Caco-2 (cell line): ENCODE measurements at regions of chr4 and their contacts with region 1.

Region 1: DNA sequence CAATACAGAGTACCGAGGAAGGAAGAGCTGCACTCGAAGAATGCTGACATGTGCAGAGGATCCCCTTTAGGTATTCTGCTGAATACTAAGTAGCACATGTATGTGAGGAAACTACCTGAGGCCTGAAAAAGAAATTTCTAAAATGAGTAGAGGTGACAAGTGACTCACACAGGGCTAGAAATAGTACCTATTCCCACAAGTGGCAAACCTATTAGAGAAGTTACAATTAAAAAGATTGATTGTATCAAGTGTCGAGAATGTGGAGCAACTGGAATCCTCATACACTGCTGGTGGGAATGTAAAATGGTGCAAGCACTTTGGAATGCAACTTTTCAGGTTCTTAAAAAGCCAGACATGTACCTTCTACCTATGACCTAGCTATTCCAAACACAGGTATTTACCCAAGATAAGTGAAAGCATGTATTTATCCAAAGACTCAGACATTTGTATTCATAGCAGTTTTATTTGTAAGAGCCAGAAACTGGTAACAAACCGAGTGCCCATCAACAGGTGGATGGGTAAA is 47.5 kb downstream of the CCSER1 start:
- DNase-seq: peak; percentile 67 to 77
- H3K4me3 ChIP-seq: no peak overlapping the region
- H3K4me3 Mint-ChIP-seq: peak overlapping the region; percentile 63
- H3K27ac Mint-ChIP-seq: peak overlapping the region; percentile 85
- H3K4me1 ChIP-seq: peaks cover 46% of the 10 kb centered on the region
- H3K4me1 Mint-ChIP-seq: peaks cover 51% of the 10 kb centered on the region
- H3K27me3 ChIP-seq: no peaks in the 10 kb centered on the region
- H3K27me3 Mint-ChIP-seq: no peaks in the 10 kb centered on the region
- CTCF ChIP-seq: no peak

Region 2: GRCh38 chr4:89765966-89766365 is 408.7 kb before region 1 on chr4:
- CTCF ChIA-PET with region 1: no interaction called
- POLR2A ChIA-PET with region 1: no interaction called
- intact Hi-C with region 1: no loop called
- DNase-seq: no peak
- H3K4me3 ChIP-seq: no peak overlapping the region
- H3K4me3 Mint-ChIP-seq: no peak overlapping the region
- H3K27ac Mint-ChIP-seq: no peak overlapping the region
- H3K4me1 ChIP-seq: no peaks in the 10 kb centered on the region
- H3K4me1 Mint-ChIP-seq: no peaks in the 10 kb centered on the region
- H3K27me3 ChIP-seq: no peaks in the 10 kb centered on the region
- H3K27me3 Mint-ChIP-seq: peaks cover 2% of the 10 kb centered on the region
- CTCF ChIP-seq: no peak

Region 3: GRCh38 chr4:89994176-89994873 is 180.3 kb before region 1 on chr4:
- CTCF ChIA-PET with region 1: no interaction called
- POLR2A ChIA-PET with region 1: no interaction called
- intact Hi-C with region 1: loop called (anchors 1 kb)
- DNase-seq: peak in 1 of 2 experiments; percentile 67
- H3K4me3 ChIP-seq: no peak overlapping the region
- H3K4me3 Mint-ChIP-seq: peak overlapping the region; percentile 10
- H3K27ac Mint-ChIP-seq: peak overlapping the region; percentile 74
- H3K4me1 ChIP-seq: peaks cover 64% of the 10 kb centered on the region
- H3K4me1 Mint-ChIP-seq: peaks cover 49% of the 10 kb centered on the region
- H3K27me3 ChIP-seq: no peaks in the 10 kb centered on the region
- H3K27me3 Mint-ChIP-seq: no peaks in the 10 kb centered on the region
- CTCF ChIP-seq: no peak

Region 4: DNA sequence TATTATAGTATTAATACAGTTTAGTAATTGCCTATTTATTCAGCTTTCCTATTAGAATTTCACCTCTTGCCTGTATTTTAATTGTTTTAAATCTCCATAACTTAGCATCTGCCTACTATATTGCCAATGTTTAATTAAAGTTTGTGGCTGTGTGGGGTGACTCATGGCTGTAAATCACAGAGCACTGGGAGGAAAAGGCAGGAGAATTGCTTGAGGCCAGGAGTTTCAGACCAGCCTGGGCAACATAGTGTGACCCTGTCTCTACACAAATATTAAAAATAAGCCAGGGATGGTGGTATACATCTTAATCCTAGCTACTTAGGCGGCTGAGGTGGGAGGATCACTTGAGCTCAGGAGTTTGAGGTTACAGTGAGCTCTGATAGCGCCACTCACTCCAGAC is 61.9 kb before region 1 on chr4:
- CTCF ChIA-PET with region 1: no interaction called
- POLR2A ChIA-PET with region 1: no interaction called
- intact Hi-C with region 1: no loop called
- DNase-seq: no peak
- H3K4me3 ChIP-seq: no peak overlapping the region
- H3K4me3 Mint-ChIP-seq: no peak overlapping the region
- H3K27ac Mint-ChIP-seq: no peak overlapping the region
- H3K4me1 ChIP-seq: no peaks in the 10 kb centered on the region
- H3K4me1 Mint-ChIP-seq: no peaks in the 10 kb centered on the region
- H3K27me3 ChIP-seq: no peaks in the 10 kb centered on the region
- H3K27me3 Mint-ChIP-seq: peaks cover 3% of the 10 kb centered on the region
- CTCF ChIP-seq: no peak

Region 5: DNA sequence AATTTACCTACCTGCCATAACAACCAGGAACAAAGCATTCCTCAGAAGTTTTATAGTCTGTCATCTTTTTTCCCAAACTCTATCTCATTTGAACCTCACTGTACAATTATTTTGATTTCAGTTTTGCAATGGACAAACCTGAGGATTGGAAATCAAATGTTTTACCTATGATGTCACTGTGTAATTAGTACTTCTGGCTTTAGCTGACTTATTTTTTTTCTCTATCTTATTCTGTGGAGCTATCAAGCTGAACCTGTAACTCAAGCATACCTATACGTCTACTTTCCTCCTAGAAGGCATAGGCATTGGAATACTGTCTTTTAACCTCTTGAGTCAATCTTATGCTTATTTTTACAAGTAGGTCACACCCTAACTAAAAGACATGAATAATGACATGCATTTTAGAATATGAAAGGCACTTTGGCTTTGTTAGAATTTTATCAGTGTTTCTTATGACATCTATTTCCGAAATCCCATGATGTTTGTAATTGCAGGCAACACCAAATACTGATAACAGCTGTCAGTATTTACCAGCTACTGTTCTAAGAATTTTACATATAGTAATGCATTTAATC is 26.0 kb before region 1 on chr4:
- CTCF ChIA-PET with region 1: no interaction called
- POLR2A ChIA-PET with region 1: no interaction called
- intact Hi-C with region 1: loop called (anchors 1 kb)
- DNase-seq: no peak
- H3K4me3 ChIP-seq: no peak overlapping the region
- H3K4me3 Mint-ChIP-seq: no peak overlapping the region
- H3K27ac Mint-ChIP-seq: no peak overlapping the region
- H3K4me1 ChIP-seq: peaks cover 15% of the 10 kb centered on the region
- H3K4me1 Mint-ChIP-seq: peaks cover 7% of the 10 kb centered on the region
- H3K27me3 ChIP-seq: no peaks in the 10 kb centered on the region
- H3K27me3 Mint-ChIP-seq: no peaks in the 10 kb centered on the region
- CTCF ChIP-seq: no peak

Region 6: GRCh38 chr4:90215286-90216039 is 40.8 kb after region 1 on chr4:
- CTCF ChIA-PET with region 1: no interaction called
- POLR2A ChIA-PET with region 1: no interaction called
- intact Hi-C with region 1: loop called (anchors 1 kb)
- DNase-seq: peak in 1 of 2 experiments; percentile 19
- H3K4me3 ChIP-seq: no peak overlapping the region
- H3K4me3 Mint-ChIP-seq: no peak overlapping the region
- H3K27ac Mint-ChIP-seq: no peak overlapping the region
- H3K4me1 ChIP-seq: peaks cover 16% of the 10 kb centered on the region
- H3K4me1 Mint-ChIP-seq: no peaks in the 10 kb centered on the region
- H3K27me3 ChIP-seq: no peaks in the 10 kb centered on the region
- H3K27me3 Mint-ChIP-seq: no peaks in the 10 kb centered on the region
- CTCF ChIP-seq: no peak